HepG2 (cell line): ENCODE measurements at regions of chr1 and their contacts with region 1.

Region 1: GRCh38 chr1:112882271-112882744 is 73.7 kb downstream of the SLC16A1 start:
- DNase-seq: no peak
- ATAC-seq: peak; percentile 57
- H3K4me3 ChIP-seq: peak overlapping the region; percentile 11 to 48 (median 42); a peak in 5 of 6 replicates
- H3K27ac ChIP-seq: no peak overlapping the region
- H3K4me1 ChIP-seq: peaks cover 26% of the 10 kb centered on the region
- H3K27me3 ChIP-seq: peaks cover 5 to 15% of the 10 kb centered on the region in 2 experiments; a peak in 3 of 5 replicates
- CTCF ChIP-seq: no peak
- EP300 ChIP-seq: no peak
- POLR2A ChIP-seq: no peak
- RAD21 ChIP-seq: no peak

Region 2: DNA sequence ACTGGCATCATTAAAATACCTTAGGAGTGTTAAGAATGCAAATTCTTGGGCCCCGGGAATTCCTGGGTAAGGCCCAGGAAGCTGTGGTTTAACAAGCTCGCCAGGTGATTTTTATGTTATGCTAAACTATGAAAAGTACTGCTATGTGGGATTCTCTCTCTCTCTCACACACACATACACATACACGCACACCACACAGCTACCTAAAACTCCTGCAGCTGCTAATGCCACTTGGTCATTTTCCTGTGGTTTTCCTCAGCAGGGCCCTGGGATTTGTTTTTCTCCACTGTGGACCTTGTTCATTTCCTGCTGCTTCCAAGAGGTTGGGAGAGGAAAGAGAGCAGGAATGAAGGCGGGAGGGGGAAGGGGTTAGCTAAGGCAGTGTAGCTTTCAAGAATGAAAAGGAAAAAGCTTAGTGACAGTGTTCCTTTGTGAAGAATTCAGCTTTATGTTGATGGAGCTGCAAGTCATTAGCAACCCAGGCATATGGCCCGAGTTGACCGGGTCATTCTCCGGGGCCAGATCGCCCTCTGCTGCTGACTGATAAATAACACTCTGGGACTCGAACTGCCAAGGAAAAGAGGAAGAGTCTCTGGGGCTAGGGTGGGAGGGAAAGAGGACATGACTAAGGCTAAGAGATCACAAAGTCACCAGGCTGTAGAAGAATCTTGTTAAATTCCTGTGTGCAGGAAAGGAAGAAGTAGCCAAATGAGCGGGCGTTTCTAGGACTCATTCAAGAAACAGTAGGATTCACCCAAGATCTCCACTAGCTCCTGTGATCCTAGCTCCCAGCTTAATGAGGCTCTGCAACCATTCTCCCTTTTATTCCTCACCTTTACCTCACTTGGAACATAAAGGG is 160.2 kb after region 1 on chr1:
- CTCF ChIA-PET with region 1: interaction called, 27 read pairs
- POLR2A ChIA-PET with region 1: interaction called, 9 read pairs
- in situ Hi-C with region 1: loop called (anchors 5 kb)
- intact Hi-C with region 1: loop called (anchors 1 kb)
- DNase-seq: peak; percentile 68
- ATAC-seq: peak; percentile 93
- H3K4me3 ChIP-seq: peak overlapping the region; percentile 4 to 50 (median 36); a peak in 4 of 6 replicates
- H3K27ac ChIP-seq: peak overlapping the region; percentile 31
- H3K4me1 ChIP-seq: peaks cover 46% of the 10 kb centered on the region
- H3K27me3 ChIP-seq: no peaks in the 10 kb centered on the region
- CTCF ChIP-seq: peak; percentile 89
- EP300 ChIP-seq: no peak
- POLR2A ChIP-seq: no peak
- RAD21 ChIP-seq: peak; percentile 87

Region 3: GRCh38 chr1:113072757-113073478 is 190.6 kb after region 1 on chr1 and contains the start of gene LRIG2:
- CTCF ChIA-PET with region 1: interaction called, 15 read pairs
- POLR2A ChIA-PET with region 1: interaction called, 13 read pairs
- in situ Hi-C with region 1: no loop called
- intact Hi-C with region 1: no loop called
- DNase-seq: peak; percentile 91
- ATAC-seq: peak; percentile 97
- H3K4me3 ChIP-seq: peak within 1 kb of the TSS; percentile 80 to 91 (median 86)
- H3K27ac ChIP-seq: peak within 1 kb of the TSS; percentile 81
- H3K4me1 ChIP-seq: peaks cover 35% of the 10 kb centered on the region
- H3K27me3 ChIP-seq: no peaks in the 10 kb centered on the region
- CTCF ChIP-seq: peak; percentile 81
- EP300 ChIP-seq: 0 out of 4 replicates have a peak, but pooled peaks of 1 of the 2 experiments have one; percentile 10
- POLR2A ChIP-seq: peak; percentile 88 to 98
- RAD21 ChIP-seq: peak; percentile 64
- total RNA-seq, gene LRIG2: 3.3 and 8.1 TPM in 2 replicates